ENCODE measurements at regions of chr13 and their contacts with region 1.

Region 1: DNA sequence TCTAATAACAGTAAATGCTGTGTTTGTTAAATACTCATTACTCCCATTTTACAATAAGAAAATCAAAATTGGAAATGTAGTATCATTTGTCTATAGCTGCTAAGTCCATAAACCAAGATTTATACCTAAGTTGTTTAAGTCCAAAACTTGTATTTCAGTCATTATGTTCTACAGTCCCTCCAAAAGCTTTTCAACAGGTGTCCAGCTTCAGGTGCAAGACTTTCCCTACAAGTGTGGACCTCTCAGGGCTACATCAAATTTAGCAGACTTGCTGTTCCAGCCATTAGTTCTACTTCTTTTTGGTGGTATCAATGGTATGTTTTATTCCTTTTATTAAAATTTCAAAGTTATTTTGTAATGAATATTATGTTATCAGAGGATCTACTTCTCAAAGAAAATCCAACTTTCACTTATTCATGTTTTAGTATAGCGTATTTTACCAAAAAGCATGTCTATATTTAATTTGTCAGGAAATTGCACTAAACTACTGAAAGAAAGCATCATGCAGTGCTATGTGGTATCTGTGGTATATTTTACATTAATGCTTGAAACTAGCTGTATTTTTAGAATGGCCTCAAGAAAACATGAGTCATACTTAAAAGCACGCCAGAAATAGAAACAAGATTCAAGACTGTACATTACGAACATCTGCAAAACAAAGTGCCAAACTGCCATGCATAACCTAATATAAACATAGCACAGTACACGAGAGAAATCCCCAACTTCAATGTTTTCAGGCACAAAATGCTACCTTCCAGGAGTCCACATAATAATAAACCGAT is 44.5 kb downstream of the VWA8 start:
- DNase-seq: no peak
- H3K4me3 Mint-ChIP-seq: peak overlapping the region; percentile 79
- H3K27ac Mint-ChIP-seq: peak overlapping the region; percentile 96
- H3K4me1 Mint-ChIP-seq: peaks cover 58% of the 10 kb centered on the region
- H3K27me3 Mint-ChIP-seq: no peaks in the 10 kb centered on the region

Region 2: GRCh38 chr13:41554626-41555386 is 361.6 kb before region 1 on chr13:
- intact Hi-C with region 1: loop called (anchors 5 kb)
- DNase-seq: peak; percentile 16
- H3K4me3 Mint-ChIP-seq: no peak overlapping the region
- H3K27ac Mint-ChIP-seq: peak overlapping the region; percentile 30
- H3K4me1 Mint-ChIP-seq: peaks cover 21% of the 10 kb centered on the region
- H3K27me3 Mint-ChIP-seq: no peaks in the 10 kb centered on the region

Region 3: DNA sequence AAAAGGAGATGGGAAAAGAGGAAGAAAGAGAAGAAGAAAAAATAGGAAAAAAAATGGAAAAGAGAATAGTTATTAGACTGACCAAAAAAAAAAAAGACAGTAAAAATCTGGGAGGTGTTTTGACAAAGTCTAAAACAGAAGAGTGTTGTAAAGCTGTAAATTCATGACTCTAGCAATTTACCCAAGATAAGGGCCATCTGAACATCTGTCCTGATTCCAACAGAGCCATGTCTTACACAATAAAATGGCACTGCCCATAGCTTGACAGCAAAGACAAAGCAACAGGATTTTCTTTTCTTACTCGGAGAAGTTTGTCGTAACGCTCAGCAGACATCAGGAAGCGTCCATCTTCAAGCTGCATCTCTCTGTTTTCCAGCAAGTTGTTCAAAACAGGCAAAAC is 25.2 kb before region 1 on chr13:
- intact Hi-C with region 1: no loop called
- DNase-seq: no peak
- H3K4me3 Mint-ChIP-seq: no peak overlapping the region
- H3K27ac Mint-ChIP-seq: no peak overlapping the region
- H3K4me1 Mint-ChIP-seq: no peaks in the 10 kb centered on the region
- H3K27me3 Mint-ChIP-seq: no peaks in the 10 kb centered on the region

Region 4: GRCh38 chr13:41928323-41928722 is 12.0 kb after region 1 on chr13:
- intact Hi-C with region 1: loop called (anchors 1 kb)
- DNase-seq: no peak
- H3K4me3 Mint-ChIP-seq: peak overlapping the region; percentile 69
- H3K27ac Mint-ChIP-seq: peak overlapping the region; percentile 79
- H3K4me1 Mint-ChIP-seq: peaks cover 48% of the 10 kb centered on the region
- H3K27me3 Mint-ChIP-seq: no peaks in the 10 kb centered on the region

Region 5: DNA sequence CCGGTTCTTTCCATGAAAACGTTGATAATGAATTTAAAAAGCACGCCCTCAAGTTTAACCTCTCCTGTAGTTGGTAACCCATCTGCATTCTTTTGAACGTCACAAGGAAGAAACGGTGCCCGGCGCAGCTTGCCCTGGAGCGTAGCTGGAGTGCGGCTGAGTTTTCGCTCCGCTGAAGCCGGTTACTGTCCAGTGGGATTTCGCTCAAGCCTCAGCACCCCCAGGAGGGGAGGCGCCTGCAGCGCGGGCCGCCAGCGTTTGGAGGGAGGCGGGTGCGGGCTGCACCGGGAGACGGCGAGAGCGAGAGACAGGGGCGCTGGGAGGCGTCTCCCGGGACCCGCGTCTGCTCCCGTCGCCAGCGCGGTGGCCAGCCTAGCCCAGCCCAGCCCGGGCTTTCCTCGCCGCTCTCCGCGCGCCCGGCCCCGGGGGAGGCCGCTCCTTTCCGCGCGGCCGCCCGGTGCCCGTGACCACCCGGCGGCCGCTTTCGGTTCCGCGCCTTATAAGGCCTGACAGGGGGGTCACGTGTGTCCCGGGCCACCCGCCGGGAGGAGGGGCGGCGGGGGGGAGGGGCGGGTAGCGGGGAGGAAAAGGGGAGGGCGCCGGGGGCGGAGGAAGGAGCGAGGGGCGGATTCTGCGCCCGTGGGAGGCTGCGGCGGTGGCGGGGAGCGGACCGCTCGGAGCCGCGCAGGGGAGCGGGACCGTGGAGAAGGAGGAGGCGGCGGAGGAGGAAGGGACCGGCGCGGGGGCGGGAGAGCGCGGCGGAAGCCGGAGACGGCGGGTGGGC is 123.8 kb after region 1 on chr13:
- intact Hi-C with region 1: loop called (anchors 2 kb)
- DNase-seq: peak; percentile 80
- H3K4me3 Mint-ChIP-seq: peak overlapping the region; percentile 87
- H3K27ac Mint-ChIP-seq: peak overlapping the region; percentile 56
- H3K4me1 Mint-ChIP-seq: peaks cover 17% of the 10 kb centered on the region
- H3K27me3 Mint-ChIP-seq: peaks cover 44% of the 10 kb centered on the region

Region 6: DNA sequence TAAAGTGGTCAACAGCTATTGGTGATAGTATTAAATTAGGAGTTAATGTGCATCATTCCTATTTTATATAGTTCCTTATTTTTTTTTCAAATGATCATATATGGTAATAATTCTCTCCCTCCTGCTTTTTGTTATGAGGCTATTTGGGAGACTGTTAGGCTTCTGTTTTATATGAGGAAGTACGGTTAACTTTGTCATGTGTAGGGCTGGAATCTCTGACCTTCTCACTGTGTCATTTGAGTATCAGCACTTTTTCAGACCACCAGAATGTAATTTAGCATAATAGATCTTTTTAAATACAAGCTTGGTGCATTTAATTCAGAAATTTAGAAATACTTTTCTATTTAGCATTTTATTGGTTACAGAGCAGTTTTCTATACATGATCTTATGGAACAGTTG is 139.8 kb after region 1 on chr13:
- intact Hi-C with region 1: no loop called
- DNase-seq: no peak
- H3K4me3 Mint-ChIP-seq: no peak overlapping the region
- H3K27ac Mint-ChIP-seq: no peak overlapping the region
- H3K4me1 Mint-ChIP-seq: peaks cover 32% of the 10 kb centered on the region
- H3K27me3 Mint-ChIP-seq: no peaks in the 10 kb centered on the region